ENCODE measurements at regions of chr19 and their contacts with region 1.

Region 1: DNA sequence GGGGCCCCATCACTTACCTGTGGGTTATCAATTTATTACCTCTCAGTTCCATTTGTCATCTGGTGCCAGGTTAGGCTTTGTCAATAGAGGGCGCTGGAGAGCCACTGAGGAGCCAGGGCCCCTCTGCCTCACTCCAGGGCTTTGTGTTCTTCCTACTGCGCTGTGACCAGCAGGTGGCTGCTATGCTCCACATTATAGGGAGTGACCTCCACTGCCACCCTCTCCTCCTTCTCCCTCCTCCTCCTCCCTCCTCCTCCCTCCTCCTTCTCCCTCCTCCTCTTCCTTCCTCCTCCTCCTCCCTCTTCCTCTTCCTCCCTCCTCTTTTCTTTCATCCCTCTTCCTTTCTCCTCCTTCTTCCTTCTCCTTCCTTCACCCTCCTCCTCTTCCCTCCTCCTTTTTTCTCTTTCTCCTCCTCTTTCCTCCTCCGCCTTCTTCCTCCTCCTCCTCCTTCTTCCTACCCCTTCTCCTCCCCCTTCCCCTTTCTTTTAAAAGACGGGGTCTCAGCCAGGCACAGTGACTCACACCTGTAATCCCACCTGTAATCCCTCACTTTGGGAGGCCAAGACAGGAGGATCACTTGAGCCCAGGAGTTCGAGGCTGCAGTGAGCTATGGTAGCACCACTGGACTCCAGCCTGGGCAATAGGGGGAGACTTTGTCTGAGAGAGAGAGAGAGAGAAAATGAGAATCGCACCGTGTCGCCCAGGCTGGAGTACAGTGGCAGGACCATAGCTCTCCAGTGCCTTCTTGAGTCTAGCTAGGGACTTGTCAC is 10.3 kb upstream of the ZBTB32 start:
- DNase-seq: peak; percentile 92
- H3K4me3 ChIP-seq: no peak overlapping the region
- H3K27ac ChIP-seq: no peak overlapping the region
- H3K4me1 ChIP-seq: no peaks in the 10 kb centered on the region
- H3K27me3 ChIP-seq: no peaks in the 10 kb centered on the region
- CTCF ChIP-seq: peak; percentile 93 to 99 (median 97)
- EP300 ChIP-seq: no peak
- POLR2A ChIP-seq: no peak

Region 2: GRCh38 chr19:35716801-35717666 is 23.0 kb after region 1 on chr19:
- in situ Hi-C with region 1: no loop called
- intact Hi-C with region 1: loop called (anchors 1 kb)
- DNase-seq: peak; percentile 89
- H3K4me3 ChIP-seq: peak overlapping the region; percentile 75 to 89 (median 86)
- H3K27ac ChIP-seq: peak overlapping the region; percentile 91 to 95 (median 92)
- H3K4me1 ChIP-seq: peaks cover 18 to 28% (median 24%) of the 10 kb centered on the region in 4 donors
- H3K27me3 ChIP-seq: no peaks in the 10 kb centered on the region
- CTCF ChIP-seq: peak; percentile 90 to 97 (median 93)
- EP300 ChIP-seq: no peak
- POLR2A ChIP-seq: peak; percentile 44

Region 3: DNA sequence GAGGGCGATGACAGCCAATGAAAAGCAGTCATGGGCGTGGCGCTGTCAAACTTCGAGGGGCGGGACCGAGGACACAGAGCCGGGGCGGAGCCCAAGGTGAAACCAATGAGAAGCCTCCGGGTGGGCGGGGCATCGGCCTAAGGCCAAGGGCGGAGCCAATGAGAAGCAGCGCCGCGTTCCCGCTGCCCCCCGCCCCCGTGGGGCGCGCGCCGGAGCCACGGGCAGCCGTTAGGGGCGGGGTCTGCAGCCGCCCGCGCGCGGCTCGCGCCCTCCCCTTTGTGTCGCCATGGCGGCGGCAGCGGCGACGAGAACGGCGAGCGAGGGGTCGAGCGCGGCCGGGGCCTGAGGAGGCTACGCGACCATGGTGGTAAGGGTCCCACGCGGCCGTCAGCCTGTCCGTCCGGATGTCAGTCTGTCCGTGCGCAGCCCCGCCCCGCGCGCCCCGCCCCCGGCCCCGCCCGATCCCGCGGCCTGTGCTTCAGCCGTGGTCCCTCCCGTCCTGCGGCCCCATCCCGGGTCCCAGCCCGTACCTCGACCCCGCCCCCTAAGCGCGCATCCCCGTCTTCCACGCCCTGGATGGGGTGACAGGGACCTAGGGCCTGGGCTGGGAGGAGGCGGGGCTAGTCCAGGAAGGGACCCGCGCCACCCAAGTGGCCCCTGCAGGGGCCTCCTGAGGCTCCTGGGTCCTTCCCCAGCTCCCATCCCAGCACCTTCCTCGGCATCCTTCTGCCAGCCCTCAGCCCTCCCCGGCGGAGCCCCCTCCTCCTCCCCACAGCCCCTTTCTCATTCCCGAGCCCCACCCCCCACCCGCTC is 81.5 kb after region 1 on chr19 and contains the start of gene ARHGAP33:
- in situ Hi-C with region 1: no loop called
- intact Hi-C with region 1: no loop called
- DNase-seq: peak; percentile 100
- H3K4me3 ChIP-seq: peak within 1 kb of the TSS; percentile 56 to 90 (median 80)
- H3K27ac ChIP-seq: peak within 1 kb of the TSS; percentile 47 to 73 (median 60)
- H3K4me1 ChIP-seq: peaks cover 4 to 15% (median 13%) of the 10 kb centered on the region in 4 donors
- H3K27me3 ChIP-seq: no peaks in the 10 kb centered on the region
- CTCF ChIP-seq: no peak
- EP300 ChIP-seq: no peak
- POLR2A ChIP-seq: no peak
- total RNA-seq, gene ARHGAP33: 6.7 to 70.3 (median 17.2) TPM